ENCODE measurements at regions of chr19 and their contacts with region 1.

Region 1: GRCh38 chr19:13861732-13862531 is 15.0 kb upstream of the NANOS3 start:
- DNase-seq: peak; percentile 93 to 97
- H3K4me3 ChIP-seq: peak overlapping the region; percentile 34 to 49 (median 44)
- H3K27ac ChIP-seq: peak overlapping the region; percentile 78 to 91 (median 87)
- H3K4me1 ChIP-seq: peaks cover 13 to 43% (median 36%) of the 10 kb centered on the region in 4 donors
- H3K27me3 ChIP-seq: peaks cover 0 to 30% (median 9%) of the 10 kb centered on the region in 3 donors
- CTCF ChIP-seq: peak in 6 of 7 experiments; percentile 98 to 100 (median 100)
- EP300 ChIP-seq: no peak
- POLR2A ChIP-seq: no peak

Region 2: DNA sequence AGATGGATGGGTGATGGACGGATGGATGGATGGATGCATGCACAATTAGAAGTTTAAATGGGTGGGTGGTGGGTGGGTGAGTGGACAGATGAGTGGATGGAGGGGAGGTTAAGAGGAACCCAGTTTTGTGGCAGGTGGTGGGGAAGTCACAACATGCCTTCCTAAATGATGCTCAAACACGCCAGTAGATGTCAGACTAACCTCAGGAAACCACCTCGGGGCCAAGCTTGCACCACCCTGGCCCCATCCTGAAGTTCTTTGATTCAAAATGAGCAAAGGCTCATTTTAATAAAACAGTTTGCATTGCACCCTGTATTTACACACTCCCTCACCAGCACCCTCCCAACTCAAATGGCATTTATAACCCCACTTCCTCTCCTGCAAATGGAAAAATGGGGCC is 264.3 kb before region 1 on chr19:
- intact Hi-C with region 1: loop called (anchors 10 kb)
- DNase-seq: peak; percentile 39 to 86
- H3K4me3 ChIP-seq: no peak overlapping the region
- H3K27ac ChIP-seq: no peak overlapping the region
- H3K4me1 ChIP-seq: peaks cover 0 to 4% (median 0%) of the 10 kb centered on the region in 4 donors
- H3K27me3 ChIP-seq: peaks cover 0 to 51% (median 0%) of the 10 kb centered on the region in 3 donors
- CTCF ChIP-seq: peak in 5 of 7 experiments; percentile 39 to 59 (median 54)
- EP300 ChIP-seq: no peak
- POLR2A ChIP-seq: no peak

Region 3: DNA sequence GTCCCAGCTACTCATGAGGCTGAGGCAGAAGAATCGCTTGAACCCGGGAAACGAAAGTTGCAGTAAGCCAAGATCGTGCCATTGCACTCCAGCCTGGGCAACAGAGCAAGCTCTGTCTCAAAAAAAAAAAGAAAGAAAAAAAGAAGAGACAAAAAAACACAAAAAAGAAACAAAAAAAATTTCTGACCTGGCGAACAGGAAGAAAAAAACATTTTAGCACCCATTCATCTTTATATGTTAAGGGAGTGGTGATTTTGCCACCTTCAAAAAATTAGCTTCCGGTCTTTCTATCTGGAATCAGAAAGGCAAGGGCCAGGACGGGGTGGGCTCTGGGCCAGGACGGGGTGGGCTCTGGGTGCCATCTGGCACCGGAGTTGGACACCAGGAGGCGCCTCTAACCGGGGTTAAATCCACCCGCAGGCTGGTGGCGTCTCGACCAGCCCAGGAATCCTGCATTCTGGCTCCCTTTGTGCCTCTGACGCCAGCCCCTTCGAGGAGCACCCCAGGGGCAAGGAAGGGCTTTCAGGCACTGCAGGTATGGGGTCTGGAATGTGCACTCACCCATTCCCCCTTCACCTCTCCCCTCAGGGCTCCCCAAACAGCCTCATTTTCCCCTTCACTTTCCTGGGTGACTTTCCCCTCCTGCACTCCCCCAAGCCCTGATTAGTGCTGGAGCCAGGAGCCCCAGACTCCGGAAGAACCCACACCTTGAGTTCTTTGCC is 77.0 kb before region 1 on chr19:
- intact Hi-C with region 1: loop called (anchors 5 kb)
- DNase-seq: peak; percentile 85
- H3K4me3 ChIP-seq: peak overlapping the region in 1 of 4 donors; percentile 2
- H3K27ac ChIP-seq: peak overlapping the region in 4 of 5 donors; percentile 14 to 45 (median 37)
- H3K4me1 ChIP-seq: peaks cover 21 to 61% (median 30%) of the 10 kb centered on the region in 4 donors
- H3K27me3 ChIP-seq: no peaks in the 10 kb centered on the region
- CTCF ChIP-seq: peak in 5 of 7 experiments; percentile 49 to 82 (median 68)
- EP300 ChIP-seq: no peak
- POLR2A ChIP-seq: no peak

Region 4: DNA sequence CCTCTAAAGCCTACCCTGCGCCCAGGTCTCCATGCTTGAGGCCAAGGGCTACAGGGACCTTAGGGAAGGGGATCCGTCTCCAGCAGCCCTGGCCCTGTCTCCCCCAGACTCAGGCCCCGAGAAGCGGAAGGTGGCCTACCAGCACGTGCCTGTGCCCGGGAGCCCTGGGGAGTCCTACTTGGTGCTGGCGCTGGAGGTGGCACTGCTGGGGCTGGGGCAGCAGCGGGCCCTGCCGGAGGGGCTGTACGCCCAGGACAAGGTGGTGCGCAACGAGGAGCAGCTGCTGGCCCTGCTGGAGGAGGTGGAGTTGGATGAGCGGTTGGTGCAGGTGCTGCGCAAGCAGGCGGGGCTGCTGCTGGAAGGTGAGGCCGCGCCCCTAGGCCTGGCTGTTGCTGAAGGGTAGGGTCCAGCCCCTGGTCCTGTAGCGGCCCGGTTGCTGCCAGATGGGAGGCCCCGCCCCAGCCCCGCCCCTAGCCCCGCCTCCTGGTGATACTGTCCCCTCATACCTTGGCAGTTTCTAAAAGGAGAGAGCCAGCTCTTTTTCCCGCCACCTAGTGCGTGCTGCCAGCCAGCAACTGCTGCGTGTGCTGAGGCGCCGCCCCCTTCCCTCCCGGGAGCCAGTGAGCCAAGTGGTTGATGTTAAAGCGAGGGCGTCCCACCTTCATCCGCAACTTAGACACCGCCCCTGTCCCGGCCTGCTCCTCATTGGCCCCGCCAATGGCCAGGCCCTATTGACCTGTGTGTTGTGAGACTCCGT is 44.1 kb before region 1 on chr19:
- intact Hi-C with region 1: no loop called
- DNase-seq: peak; percentile 87 to 96
- H3K4me3 ChIP-seq: peak overlapping the region; percentile 27 to 50 (median 38)
- H3K27ac ChIP-seq: peak overlapping the region; percentile 54 to 78 (median 72)
- H3K4me1 ChIP-seq: peaks cover 7 to 16% (median 13%) of the 10 kb centered on the region in 4 donors
- H3K27me3 ChIP-seq: no peaks in the 10 kb centered on the region
- CTCF ChIP-seq: no peak
- EP300 ChIP-seq: no peak
- POLR2A ChIP-seq: no peak

Region 5: DNA sequence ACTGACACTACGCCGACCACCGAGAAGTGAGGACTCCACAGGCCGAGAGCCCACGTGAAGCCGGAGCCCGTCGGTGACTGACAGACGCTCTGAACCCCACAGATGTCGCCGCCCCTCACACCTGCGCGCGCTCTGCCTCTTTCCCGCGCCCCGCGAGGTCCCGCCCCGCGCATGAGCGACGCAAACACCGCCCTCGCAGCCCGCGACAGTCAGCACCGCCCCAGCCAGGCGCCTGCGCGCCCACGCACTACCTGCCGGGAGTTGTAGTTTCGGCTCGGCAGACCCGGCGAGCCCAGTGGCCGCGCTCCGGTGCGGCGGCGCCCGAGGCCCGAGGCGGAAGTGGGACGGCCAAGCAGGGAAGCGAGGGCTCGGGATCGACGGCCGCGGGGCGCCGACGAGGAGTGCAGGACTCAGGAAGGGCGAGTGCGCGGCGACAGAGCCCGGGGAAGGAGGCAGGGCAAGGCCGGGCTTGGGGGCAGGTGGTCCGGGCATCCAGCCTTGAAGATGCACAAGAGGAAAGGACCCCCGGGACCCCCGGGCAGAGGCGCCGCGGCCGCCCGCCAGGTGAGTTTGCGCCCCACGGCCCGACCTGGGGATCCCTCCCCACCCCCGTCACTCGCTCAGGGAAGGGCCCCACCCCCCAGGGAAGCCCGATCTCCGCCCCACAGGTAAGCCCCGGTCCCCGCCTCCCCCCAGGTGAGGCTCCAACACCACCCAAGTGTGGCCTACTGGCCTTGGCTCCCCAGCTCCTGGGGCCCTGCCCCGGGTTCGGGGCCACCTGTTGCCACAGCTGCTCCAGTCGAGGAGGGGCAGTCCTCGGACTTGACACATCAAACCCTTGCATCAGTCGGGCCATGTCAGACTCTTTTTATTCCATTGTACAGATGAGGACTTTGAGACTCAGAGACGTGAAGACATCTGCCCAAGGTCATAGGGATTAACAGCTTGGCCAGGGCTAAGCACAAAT is 44.3 kb after region 1 on chr19 and contains the starts of genes BRME1 and CC2D1A:
- intact Hi-C with region 1: no loop called
- DNase-seq: peak; percentile 96 to 97
- H3K4me3 ChIP-seq: peak within 1 kb of the TSS; percentile 70 to 97 (median 78)
- H3K27ac ChIP-seq: peak within 1 kb of the TSS; percentile 84 to 91 (median 89)
- H3K4me1 ChIP-seq: peaks cover 14 to 34% (median 32%) of the 10 kb centered on the region in 4 donors
- H3K27me3 ChIP-seq: no peaks in the 10 kb centered on the region
- CTCF ChIP-seq: peak in 1 of 7 experiments; percentile 14
- EP300 ChIP-seq: no peak
- POLR2A ChIP-seq: peak in 1 of 4 donors; percentile 35
- total RNA-seq, gene BRME1: 0.87 to 14.3 (median 1.8) TPM in 4 of 5 donors, not detected in the other
- total RNA-seq, gene CC2D1A: 24.8 to 381 (median 49.6) TPM

Region 6: GRCh38 chr19:13952154-13953035 is 90.5 kb after region 1 on chr19 and contains the start of gene DCAF15:
- intact Hi-C with region 1: no loop called
- DNase-seq: peak; percentile 99 to 100
- H3K4me3 ChIP-seq: peak within 1 kb of the TSS; percentile 70 to 97 (median 92)
- H3K27ac ChIP-seq: peak within 1 kb of the TSS; percentile 80 to 93 (median 89)
- H3K4me1 ChIP-seq: peaks cover 11 to 24% (median 20%) of the 10 kb centered on the region in 4 donors
- H3K27me3 ChIP-seq: no peaks in the 10 kb centered on the region
- CTCF ChIP-seq: no peak
- EP300 ChIP-seq: no peak
- POLR2A ChIP-seq: no peak
- total RNA-seq, gene DCAF15: 7.1 to 37.3 (median 9.8) TPM